CD8-positive, alpha-beta T cell (primary cell): ENCODE measurements at regions of chr13 and their contacts with region 1.

Region 1: DNA sequence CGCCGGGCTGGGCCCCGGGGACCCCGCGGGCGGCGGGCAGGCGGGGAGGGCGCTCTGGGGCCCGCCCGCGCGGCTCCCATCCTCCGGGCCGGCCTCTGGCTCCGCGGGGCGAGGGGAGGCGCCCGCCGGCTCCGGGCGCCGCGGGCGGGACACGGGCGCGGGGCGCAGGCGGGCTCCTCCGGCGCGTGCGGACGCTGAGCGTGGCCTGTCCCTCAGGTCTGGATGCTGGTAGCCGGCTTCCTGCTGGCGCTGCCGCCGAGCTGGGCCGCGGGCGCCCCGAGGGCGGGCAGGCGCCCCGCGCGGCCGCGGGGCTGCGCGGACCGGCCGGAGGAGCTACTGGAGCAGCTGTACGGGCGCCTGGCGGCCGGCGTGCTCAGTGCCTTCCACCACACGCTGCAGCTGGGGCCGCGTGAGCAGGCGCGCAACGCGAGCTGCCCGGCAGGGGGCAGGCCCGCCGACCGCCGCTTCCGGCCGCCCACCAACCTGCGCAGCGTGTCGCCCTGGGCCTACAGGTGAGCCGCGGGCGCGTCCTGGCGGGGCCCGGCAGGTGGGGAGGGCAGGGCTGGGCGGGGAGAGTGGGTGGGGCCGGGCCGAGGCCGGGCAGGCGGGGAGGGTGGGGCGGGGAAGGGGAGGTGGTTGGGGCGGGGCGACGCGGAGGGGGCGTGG is 414 bp downstream of the IL17D start:
- DNase-seq: peak; percentile 56 to 90 (median 76)
- ATAC-seq: peak; percentile 86
- H3K4me3 ChIP-seq: no peak overlapping the region
- H3K4me3 Mint-ChIP-seq: no peak overlapping the region
- H3K27ac ChIP-seq: no peak overlapping the region
- H3K27ac Mint-ChIP-seq: no peak overlapping the region
- H3K4me1 ChIP-seq: peaks cover 11% of the 10 kb centered on the region
- H3K4me1 Mint-ChIP-seq: peaks cover 15% of the 10 kb centered on the region
- H3K27me3 ChIP-seq: peaks cover 0 to 3% of the 10 kb centered on the region in 2 experiments
- H3K27me3 Mint-ChIP-seq: peaks cover 12% of the 10 kb centered on the region
- CTCF ChIP-seq: peak; percentile 31

Region 2: DNA sequence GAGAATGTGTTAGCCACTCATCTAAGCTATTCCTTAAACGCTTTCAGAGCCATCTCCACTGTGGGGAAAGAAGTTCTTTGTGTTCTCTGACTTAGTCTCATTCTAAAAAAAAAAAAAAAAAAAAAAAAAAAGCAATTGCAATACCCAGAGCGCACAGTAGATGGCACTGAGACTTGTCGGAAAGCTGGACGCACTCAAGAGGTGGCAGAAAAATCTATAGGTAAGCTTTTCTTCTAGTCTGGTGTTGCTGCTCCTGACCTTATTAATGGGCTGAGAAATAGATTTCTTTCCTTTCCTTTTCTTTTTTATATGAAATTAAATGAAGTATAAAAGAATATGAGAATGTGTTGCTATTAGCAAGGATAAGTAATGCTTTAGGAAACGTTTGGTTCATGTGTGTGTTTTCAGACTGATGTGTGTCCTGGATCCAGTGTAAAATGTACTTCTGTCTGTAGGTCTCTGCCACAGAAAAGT is 506.5 kb before region 1 on chr13:
- CTCF ChIA-PET with region 1: no interaction called
- POLR2A ChIA-PET with region 1: no interaction called
- intact Hi-C with region 1: loop called in 1 of 2 experiments (anchors 5 kb)
- DNase-seq: peak in 4 of 9 experiments; percentile 24 to 71 (median 46)
- ATAC-seq: peak; percentile 76
- H3K4me3 ChIP-seq: no peak overlapping the region
- H3K4me3 Mint-ChIP-seq: no peak overlapping the region
- H3K27ac ChIP-seq: no peak overlapping the region
- H3K27ac Mint-ChIP-seq: no peak overlapping the region
- H3K4me1 ChIP-seq: peaks cover 16% of the 10 kb centered on the region
- H3K4me1 Mint-ChIP-seq: peaks cover 18% of the 10 kb centered on the region
- H3K27me3 ChIP-seq: peaks cover 21 to 38% of the 10 kb centered on the region in 2 experiments
- H3K27me3 Mint-ChIP-seq: peaks cover 42% of the 10 kb centered on the region
- CTCF ChIP-seq: peak; percentile 78

Region 3: DNA sequence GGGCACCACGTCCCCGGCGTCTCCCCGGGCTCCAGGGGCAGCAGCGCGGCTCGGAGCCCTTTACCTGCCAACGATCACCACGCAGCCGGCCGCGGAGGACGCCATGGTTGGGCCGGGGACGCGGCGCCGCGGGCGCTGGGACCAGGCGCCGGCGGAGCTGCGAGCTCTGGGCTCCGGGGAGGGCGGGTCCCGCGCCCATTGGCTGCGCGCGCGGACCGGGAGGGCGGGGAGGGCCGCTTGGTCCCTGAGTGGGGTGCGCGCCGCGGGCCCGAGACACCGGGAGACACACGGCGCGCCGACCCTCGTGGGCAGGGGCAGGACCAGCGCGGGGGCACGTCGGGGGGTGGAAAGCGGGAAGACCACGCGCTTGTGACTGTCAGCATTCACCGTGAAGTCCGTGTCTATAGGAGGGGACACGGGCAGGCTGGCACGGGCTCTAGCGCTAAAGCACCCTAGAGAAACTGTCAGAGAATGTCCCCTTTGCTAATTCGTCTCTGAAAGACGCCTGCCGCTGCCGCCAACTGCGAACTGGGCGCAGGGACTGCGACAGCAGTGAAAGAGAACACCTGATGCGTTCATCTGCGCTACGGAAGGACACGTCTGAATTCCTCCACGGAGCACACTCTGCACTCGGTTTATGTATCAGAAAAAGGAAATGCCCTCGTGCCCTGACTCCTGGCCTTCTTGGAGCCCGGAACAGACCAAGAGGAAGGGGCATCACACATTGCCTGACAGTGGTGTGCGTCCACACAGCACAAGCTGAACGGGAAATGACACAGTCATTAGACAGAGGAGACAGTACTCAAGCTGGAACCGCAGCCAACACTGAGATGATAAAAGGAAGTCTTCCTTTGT is 178.0 kb before region 1 on chr13 and contains the start of gene CRYL1:
- CTCF ChIA-PET with region 1: no interaction called
- POLR2A ChIA-PET with region 1: no interaction called
- intact Hi-C with region 1: loop called (anchors 2 kb)
- DNase-seq: peak; percentile 46 to 86 (median 74)
- ATAC-seq: peak; percentile 89
- H3K4me3 ChIP-seq: peak within 1 kb of the TSS; percentile 78 to 81
- H3K4me3 Mint-ChIP-seq: peak within 1 kb of the TSS; percentile 96
- H3K27ac ChIP-seq: peak within 1 kb of the TSS; percentile 75 to 87
- H3K27ac Mint-ChIP-seq: peak within 1 kb of the TSS; percentile 96
- H3K4me1 ChIP-seq: peaks cover 17% of the 10 kb centered on the region
- H3K4me1 Mint-ChIP-seq: peaks cover 22% of the 10 kb centered on the region
- H3K27me3 ChIP-seq: no peaks in the 10 kb centered on the region
- H3K27me3 Mint-ChIP-seq: peaks cover 7% of the 10 kb centered on the region
- CTCF ChIP-seq: no peak
- total RNA-seq, gene CRYL1: 8.0 to 8.5 TPM

Region 4: DNA sequence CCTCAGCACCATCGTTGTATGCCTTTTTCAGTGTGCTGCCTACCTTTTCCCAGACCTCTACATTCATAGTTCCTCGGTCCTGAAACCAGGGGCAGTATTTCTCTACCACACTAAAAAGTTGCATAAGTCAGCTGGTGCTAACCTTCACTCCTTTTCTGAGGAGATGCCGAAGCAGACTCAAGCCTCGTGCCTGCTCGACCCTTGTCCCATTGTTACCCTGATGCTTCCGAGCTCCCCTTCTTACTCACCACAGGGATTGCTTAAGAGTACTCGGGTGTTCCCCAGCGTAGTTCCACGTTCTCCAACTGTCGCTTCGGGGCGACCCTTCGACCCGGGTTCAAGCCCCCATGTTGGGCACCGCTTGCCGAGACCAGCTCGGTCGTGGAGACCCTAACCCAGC is 19.4 kb before region 1 on chr13:
- CTCF ChIA-PET with region 1: no interaction called
- POLR2A ChIA-PET with region 1: no interaction called
- intact Hi-C with region 1: no loop called
- DNase-seq: no peak
- ATAC-seq: no peak
- H3K4me3 ChIP-seq: no peak overlapping the region
- H3K4me3 Mint-ChIP-seq: no peak overlapping the region
- H3K27ac ChIP-seq: no peak overlapping the region
- H3K27ac Mint-ChIP-seq: no peak overlapping the region
- H3K4me1 ChIP-seq: no peaks in the 10 kb centered on the region
- H3K4me1 Mint-ChIP-seq: no peaks in the 10 kb centered on the region
- H3K27me3 ChIP-seq: no peaks in the 10 kb centered on the region
- H3K27me3 Mint-ChIP-seq: no peaks in the 10 kb centered on the region
- CTCF ChIP-seq: no peak

Region 5: DNA sequence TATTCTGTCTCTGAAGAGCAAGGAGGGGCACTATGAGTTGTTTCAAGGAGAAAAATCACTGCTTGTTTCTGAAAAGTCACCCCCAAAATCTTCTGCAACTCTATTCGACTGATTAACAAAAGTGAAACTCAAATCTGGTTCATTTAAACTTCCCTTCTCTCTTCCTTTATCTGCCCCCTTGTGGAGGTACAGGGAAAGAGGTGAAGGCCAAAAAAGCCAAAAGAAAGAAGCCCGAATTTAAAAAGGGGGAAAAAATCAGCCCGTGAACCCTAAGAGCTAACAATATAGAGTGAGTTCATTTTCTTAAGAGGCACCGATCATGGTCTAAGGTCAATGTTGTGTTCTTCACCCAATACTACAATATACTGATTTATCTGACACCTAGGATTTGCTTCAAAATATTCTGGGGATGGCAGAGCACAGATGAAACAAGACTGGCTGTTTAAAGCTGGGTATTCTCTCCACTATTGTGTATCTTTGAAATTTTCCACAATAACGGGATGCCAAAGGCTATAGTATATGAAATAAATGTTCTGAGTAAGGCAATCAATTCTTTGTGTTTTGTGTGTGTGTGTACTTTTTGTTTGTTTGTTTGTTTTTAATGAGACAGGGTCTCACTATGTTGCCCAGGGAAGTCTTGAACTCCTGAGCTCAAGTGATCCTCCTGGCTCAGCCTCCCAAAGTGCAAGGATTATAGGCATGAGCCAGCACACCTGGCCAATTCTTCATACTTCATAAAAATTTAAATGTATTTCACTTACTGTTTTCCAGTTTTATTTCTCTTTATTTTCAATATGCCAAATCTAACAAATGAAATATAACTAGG is 124.8 kb after region 1 on chr13:
- CTCF ChIA-PET with region 1: interaction called, 24 read pairs
- POLR2A ChIA-PET with region 1: no interaction called
- intact Hi-C with region 1: no loop called
- DNase-seq: peak in 6 of 9 experiments; percentile 5 to 81 (median 36)
- ATAC-seq: peak; percentile 94
- H3K4me3 ChIP-seq: peak overlapping the region in 1 of 2 experiments; percentile 10
- H3K4me3 Mint-ChIP-seq: peak overlapping the region; percentile 44
- H3K27ac ChIP-seq: no peak overlapping the region
- H3K27ac Mint-ChIP-seq: peak overlapping the region; percentile 70
- H3K4me1 ChIP-seq: no peaks in the 10 kb centered on the region
- H3K4me1 Mint-ChIP-seq: peaks cover 7% of the 10 kb centered on the region
- H3K27me3 ChIP-seq: no peaks in the 10 kb centered on the region
- H3K27me3 Mint-ChIP-seq: no peaks in the 10 kb centered on the region
- CTCF ChIP-seq: peak; percentile 71

Region 6: GRCh38 chr13:21176220-21176982 is 472.5 kb after region 1 on chr13 and contains the starts of genes MRPL57 and SKA3:
- CTCF ChIA-PET with region 1: interaction called, 4 read pairs
- POLR2A ChIA-PET with region 1: no interaction called
- intact Hi-C with region 1: loop called in 1 of 2 experiments (anchors 10 kb)
- DNase-seq: peak; percentile 86 to 97 (median 93)
- ATAC-seq: peak; percentile 97
- H3K4me3 ChIP-seq: peak within 1 kb of the TSS; percentile 83 to 93
- H3K4me3 Mint-ChIP-seq: peak within 1 kb of the TSS; percentile 97
- H3K27ac ChIP-seq: peak within 1 kb of the TSS; percentile 80 to 92
- H3K27ac Mint-ChIP-seq: peak within 1 kb of the TSS; percentile 96
- H3K4me1 ChIP-seq: peaks cover 18% of the 10 kb centered on the region
- H3K4me1 Mint-ChIP-seq: peaks cover 26% of the 10 kb centered on the region
- H3K27me3 ChIP-seq: no peaks in the 10 kb centered on the region
- H3K27me3 Mint-ChIP-seq: no peaks in the 10 kb centered on the region
- CTCF ChIP-seq: no peak
- total RNA-seq, gene MRPL57: 9.8 to 11.1 TPM
- total RNA-seq, gene SKA3: 0.36 to 0.49 TPM

Region 7: DNA sequence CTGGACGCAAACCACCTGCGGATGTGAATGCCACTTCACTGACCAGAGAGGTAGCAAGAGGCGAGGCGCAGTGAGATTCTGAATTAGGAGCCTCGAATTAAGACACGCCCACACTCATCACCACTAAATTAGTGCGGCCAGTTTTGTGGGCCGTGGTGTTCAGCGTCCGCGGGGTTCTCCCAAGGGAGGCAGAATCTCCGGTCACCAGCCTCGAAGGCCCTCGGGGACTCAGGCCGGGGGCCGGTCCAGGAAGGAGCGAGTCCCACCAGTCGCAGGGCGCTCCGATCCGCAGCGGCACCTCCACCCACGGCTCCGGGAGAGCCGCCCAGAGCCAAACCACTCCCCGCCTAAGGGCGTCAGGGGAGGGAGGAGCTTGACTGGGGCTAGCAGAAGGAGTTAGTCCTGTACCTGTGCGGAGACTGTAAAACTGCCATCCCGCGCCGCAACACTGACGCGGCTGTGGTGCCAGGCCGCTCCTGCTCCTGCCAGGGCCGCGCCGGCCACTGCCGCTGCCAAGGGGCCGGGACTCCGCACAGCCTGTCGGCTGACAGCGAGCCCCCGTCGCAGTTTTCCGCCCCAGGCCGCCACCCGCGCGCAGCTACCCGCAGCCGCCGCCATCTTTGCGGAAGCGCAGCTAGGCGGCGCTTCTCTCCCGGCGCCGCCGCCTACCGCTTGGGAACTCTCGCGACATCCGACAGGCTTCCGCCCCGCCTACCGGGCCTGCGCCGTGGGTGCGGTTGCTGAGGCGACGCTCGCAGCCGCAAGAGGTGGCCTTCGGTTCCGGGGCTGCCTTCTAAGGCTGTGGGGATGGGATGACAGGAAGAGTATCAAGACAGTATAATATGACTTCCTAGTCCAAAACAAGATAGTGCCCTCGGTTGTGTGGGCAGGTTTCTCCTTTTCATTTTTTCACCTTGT is 899.9 kb after region 1 on chr13 and contains the start of gene MICU2:
- CTCF ChIA-PET with region 1: no interaction called
- POLR2A ChIA-PET with region 1: no interaction called
- intact Hi-C with region 1: loop called (anchors 5 to 10 kb)
- DNase-seq: peak; percentile 91 to 98 (median 96)
- ATAC-seq: peak; percentile 92
- H3K4me3 ChIP-seq: peak within 1 kb of the TSS; percentile 73 to 85
- H3K4me3 Mint-ChIP-seq: peak within 1 kb of the TSS; percentile 84
- H3K27ac ChIP-seq: peak within 1 kb of the TSS; percentile 84 to 97
- H3K27ac Mint-ChIP-seq: peak within 1 kb of the TSS; percentile 94
- H3K4me1 ChIP-seq: peaks cover 24% of the 10 kb centered on the region
- H3K4me1 Mint-ChIP-seq: peaks cover 47% of the 10 kb centered on the region
- H3K27me3 ChIP-seq: no peaks in the 10 kb centered on the region
- H3K27me3 Mint-ChIP-seq: peaks cover 9% of the 10 kb centered on the region
- CTCF ChIP-seq: no peak
- total RNA-seq, gene MICU2: 28.3 to 36.0 TPM